Colonic mucosa (tissue), 4 donors: ENCODE measurements at regions of chr5 and their contacts with region 1.

Region 1: DNA sequence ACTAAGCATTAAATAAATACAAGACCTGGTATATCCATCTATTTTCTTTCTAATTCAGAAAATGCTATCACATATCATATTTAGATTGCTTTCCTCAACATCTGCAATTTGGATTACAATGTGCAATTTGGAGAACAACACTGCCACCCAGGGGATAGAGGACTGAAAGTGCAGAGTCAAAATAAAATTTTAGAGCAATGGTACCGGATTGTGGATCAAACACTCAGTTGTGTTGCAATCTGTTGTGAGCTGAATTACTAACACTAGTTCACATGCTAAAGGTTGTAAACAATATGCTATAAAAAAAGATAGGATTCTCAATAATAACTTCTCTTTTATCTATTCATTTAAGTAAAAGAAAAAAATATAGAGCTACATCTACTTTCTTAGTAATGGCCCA is 11.9 kb upstream of the SRFBP1 start:
- DNase-seq: peak; percentile 41
- H3K4me3 ChIP-seq: no peak overlapping the region
- H3K27ac ChIP-seq: no peak overlapping the region
- H3K4me1 ChIP-seq: no peaks in the 10 kb centered on the region
- H3K27me3 ChIP-seq: no peaks in the 10 kb centered on the region
- CTCF ChIP-seq: peak; percentile 44

Region 2: DNA sequence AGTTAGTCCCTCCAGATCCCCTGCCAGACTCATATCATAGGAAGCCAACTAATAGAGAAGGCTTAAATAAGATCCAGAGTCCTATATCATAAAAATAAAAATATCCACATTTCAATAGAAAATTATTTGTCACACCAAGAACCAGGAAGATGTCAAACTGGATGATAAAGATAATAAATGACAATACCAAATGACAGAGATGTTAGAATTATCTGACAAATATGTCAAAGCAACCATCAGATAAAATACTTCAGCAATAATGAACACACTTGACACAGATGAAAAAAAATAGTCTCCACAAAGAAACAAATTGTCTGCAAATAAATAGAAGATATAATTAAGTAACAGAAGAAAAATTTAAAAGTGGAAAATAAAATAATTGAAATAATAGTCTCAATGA is 398.9 kb before region 1 on chr5:
- intact Hi-C with region 1: no loop called
- DNase-seq: no peak
- H3K4me3 ChIP-seq: no peak overlapping the region
- H3K27ac ChIP-seq: no peak overlapping the region
- H3K4me1 ChIP-seq: no peaks in the 10 kb centered on the region
- H3K27me3 ChIP-seq: no peaks in the 10 kb centered on the region
- CTCF ChIP-seq: no peak

Region 3: DNA sequence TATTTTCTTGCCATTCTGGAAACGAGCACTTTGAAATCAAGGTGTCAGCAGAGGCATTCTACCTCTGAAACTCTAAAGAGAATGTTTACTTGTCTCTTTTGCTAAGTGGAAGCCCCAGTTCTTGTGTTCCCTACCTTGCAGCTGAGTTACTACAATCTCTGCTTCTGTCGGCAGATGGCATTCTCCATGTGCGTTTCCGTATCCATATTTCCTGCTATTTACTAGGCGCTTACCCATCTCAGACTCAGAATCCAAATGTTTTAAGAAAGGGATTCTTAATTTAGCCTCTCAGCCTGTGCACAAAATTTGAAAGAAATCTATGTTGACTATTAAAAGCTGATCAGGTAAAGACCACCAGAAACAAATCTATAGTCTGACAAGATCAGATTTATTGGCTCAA is 319.5 kb before region 1 on chr5:
- intact Hi-C with region 1: loop called (anchors 5 kb)
- DNase-seq: peak; percentile 16
- H3K4me3 ChIP-seq: no peak overlapping the region
- H3K27ac ChIP-seq: no peak overlapping the region
- H3K4me1 ChIP-seq: no peaks in the 10 kb centered on the region
- H3K27me3 ChIP-seq: no peaks in the 10 kb centered on the region
- CTCF ChIP-seq: peak; percentile 20

Region 4: GRCh38 chr5:121890297-121890858 is 59.5 kb before region 1 on chr5:
- intact Hi-C with region 1: no loop called
- DNase-seq: no peak
- H3K4me3 ChIP-seq: no peak overlapping the region
- H3K27ac ChIP-seq: no peak overlapping the region
- H3K4me1 ChIP-seq: no peaks in the 10 kb centered on the region
- H3K27me3 ChIP-seq: no peaks in the 10 kb centered on the region
- CTCF ChIP-seq: no peak